Mammary epithelial cell (primary cell): ENCODE measurements at regions of chr16 and their contacts with region 1.

Region 1: DNA sequence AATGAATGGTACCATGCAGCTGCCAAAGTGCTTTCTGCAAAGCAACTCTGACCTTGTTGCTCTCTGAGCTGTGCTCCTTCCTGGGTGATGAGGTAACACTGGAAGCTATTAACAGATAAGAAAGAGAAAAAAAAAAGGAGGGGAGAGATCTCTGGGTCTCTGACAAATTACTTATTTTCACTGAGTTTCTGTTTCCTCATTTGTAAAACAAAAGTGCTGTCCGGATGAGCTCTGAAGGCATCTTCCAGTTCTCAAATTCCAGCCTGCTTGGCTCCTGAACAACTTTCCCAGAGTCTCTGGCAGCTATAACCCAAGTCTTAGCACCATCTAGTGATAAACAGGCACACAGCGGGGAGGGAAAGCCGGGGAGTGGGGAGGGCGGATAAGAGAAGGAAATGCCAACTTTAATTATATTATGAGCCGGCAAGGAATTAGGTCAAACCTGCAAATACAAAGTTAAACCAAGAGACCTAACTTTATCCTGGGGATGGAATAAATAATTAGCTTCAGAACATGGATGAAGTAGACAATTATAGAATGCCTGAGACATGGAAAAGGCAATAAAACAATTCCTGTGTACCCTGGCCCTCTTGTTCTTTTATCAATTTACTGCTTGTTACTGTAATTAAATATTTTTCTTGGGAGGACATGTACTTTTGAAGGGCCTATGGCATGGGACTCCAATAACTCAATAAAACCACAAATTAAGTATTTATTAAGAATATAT is 61.3 kb upstream of the KIFC3 start:
- DNase-seq: peak; percentile 45
- H3K4me3 ChIP-seq: no peak overlapping the region
- H3K27ac ChIP-seq: no peak overlapping the region
- H3K4me1 ChIP-seq: peaks cover 13% of the 10 kb centered on the region
- H3K27me3 ChIP-seq: no peaks in the 10 kb centered on the region
- CTCF ChIP-seq: peak; percentile 59 to 86

Region 2: DNA sequence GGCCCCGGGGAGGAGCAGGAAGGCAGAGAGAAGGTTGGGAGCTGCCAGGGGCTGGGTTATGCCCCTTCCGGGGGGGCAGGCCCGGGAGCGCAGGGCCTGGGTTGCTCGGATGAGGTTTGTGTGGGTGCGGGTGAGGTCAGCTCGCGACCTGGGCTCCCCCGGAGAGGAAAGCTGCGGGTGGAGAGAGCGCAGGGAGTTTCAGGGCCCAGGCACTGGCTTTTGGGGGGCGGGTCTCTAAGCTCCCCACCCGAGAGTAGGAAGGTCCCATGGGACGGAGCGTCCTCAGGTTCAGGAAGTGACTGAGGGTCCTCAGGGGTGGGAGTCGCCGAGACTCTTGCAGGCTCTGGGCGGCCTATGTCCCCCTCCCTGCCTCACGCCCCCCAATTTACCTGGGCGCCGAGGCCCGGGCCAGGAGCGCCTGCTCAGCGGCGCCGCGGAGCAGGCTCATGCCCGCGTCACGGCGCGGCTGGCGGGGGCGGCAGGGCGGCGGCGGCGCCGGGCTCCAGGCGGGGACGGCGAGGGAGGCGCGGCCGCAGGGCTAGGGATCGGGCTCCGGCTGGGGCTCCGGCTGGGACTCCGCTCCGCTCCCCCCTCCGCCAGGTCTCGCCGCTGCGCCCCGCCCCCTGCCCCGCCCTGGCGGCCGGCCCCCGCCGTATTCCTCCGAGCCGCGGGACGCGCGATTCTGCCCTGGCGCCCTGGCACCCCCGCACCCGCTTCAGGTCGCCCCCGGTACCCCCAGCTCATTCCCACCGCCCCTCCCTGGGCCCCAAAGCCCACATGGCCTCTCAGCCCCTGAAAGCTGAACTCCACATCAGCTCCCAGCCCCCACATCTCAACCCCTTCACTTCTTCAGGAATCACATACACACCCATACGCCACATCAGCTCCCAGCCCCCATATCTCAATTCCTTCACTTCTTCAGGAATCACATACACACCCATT is 377.4 kb before region 1 on chr16 and contains the start of gene DOK4:
- CTCF ChIA-PET with region 1: no interaction called
- dilution Hi-C with region 1: no loop called
- in situ Hi-C with region 1: no loop called
- intact Hi-C with region 1: no loop called
- DNase-seq: peak; percentile 74
- H3K4me3 ChIP-seq: peak within 1 kb of the TSS; percentile 71 to 81 (median 76)
- H3K27ac ChIP-seq: peak within 1 kb of the TSS; percentile 57
- H3K4me1 ChIP-seq: peaks cover 11% of the 10 kb centered on the region
- H3K27me3 ChIP-seq: no peaks in the 10 kb centered on the region
- CTCF ChIP-seq: no peak
- total RNA-seq, gene DOK4: 14.8 to 20.0 TPM

Region 3: DNA sequence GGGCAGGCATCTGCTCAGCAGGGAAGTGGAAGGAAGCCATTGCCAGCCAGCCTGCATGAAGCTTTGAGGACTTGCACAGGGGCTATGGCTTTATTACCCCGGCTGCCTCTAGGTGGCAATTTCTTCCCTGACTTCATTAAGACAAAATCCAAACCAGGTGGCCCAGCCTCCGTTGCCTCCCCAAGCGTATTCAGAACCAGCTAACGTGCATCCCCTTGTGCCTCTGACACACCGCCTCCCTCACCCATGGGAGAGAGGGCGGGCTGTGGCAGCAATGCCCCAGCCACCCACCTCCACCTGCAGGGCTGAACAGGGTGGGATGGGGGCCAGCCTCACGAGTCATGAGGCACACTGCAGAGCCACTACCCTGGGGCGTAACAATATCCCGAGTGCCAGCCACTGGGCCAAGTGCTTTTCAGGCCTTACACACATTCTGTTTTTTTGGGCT is 68.1 kb before region 1 on chr16:
- CTCF ChIA-PET with region 1: interaction called, 4 read pairs
- dilution Hi-C with region 1: loop called (anchors 5 kb)
- in situ Hi-C with region 1: no loop called
- intact Hi-C with region 1: loop called (anchors 1 kb)
- DNase-seq: peak; percentile 71
- H3K4me3 ChIP-seq: no peak overlapping the region
- H3K27ac ChIP-seq: no peak overlapping the region
- H3K4me1 ChIP-seq: peaks cover 36% of the 10 kb centered on the region
- H3K27me3 ChIP-seq: no peaks in the 10 kb centered on the region
- CTCF ChIP-seq: peak; percentile 37 to 70

Region 4: DNA sequence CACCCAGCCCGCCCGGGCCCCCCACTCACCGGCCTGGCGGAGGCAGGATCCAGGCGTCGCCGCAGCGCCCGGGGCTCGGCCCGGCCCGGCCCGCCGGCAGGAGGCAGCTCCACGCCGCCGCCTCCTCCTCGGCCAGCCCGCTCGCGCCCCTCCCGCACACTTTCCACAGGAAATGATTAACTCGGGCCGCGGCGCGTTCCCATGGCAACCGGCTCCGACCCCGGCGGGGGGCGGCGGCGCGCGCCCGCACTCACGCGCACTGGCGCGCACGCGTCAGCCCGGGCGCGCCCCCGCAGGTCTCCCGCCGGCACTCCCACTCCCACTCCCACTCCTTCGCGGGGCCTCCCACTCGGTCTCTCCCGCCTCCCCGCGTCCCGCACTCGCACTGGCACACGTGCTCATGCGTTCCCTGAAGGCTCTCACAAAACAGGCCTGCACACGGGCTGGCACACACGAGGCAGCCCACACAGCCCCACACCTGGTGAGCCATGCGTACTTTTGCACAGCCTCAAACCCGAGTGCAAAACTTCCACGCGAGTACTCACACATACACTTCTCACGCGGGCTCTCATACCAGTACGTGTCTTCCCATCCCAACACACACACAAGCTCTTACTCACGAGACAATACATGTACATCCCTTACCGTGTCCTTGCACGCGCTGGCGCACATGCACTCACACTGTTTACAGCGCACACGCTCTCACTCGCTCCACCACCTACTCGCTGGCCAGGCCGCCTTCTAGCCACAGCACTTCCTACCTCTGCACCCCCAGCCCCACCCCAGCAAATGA is 61.1 kb before region 1 on chr16 and contains the start of gene KIFC3:
- CTCF ChIA-PET with region 1: interaction called, 4 read pairs
- dilution Hi-C with region 1: loop called (anchors 5 kb)
- in situ Hi-C with region 1: no loop called
- intact Hi-C with region 1: loop called (anchors 1 kb)
- DNase-seq: peak; percentile 55
- H3K4me3 ChIP-seq: peak within 1 kb of the TSS; percentile 44 to 66 (median 65)
- H3K27ac ChIP-seq: peak within 1 kb of the TSS; percentile 78
- H3K4me1 ChIP-seq: peaks cover 49% of the 10 kb centered on the region
- H3K27me3 ChIP-seq: no peaks in the 10 kb centered on the region
- CTCF ChIP-seq: no peak
- total RNA-seq, gene KIFC3: 35.8 to 59.8 TPM

Region 5: DNA sequence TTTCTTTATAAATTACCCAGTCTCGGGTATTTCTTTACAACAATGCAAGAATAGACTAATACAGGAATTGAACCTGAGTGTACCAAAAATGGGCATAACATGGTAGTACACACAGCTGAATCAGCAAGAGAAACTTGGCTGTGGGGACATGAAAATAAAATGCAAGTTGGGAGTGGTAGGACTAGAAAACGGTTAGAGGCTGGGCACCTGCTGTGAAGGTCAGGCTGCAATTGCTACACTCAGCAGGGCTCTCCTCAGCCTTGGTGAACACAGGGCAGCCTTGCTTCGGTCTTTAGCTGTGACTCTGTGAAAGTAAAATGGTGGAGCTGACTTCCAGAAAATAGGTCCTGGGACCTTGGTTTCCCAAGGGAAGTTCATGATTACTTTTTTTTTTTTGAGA is 61.7 kb after region 1 on chr16:
- CTCF ChIA-PET with region 1: no interaction called
- dilution Hi-C with region 1: no loop called
- in situ Hi-C with region 1: no loop called
- intact Hi-C with region 1: no loop called
- DNase-seq: no peak
- H3K4me3 ChIP-seq: no peak overlapping the region
- H3K27ac ChIP-seq: no peak overlapping the region
- H3K4me1 ChIP-seq: peaks cover 13% of the 10 kb centered on the region
- H3K27me3 ChIP-seq: no peaks in the 10 kb centered on the region
- CTCF ChIP-seq: no peak